Posterior cingulate gyrus (tissue), 11 donors: ENCODE measurements at regions of chr4 and their contacts with region 1.

Region 1: GRCh38 chr4:40897557-40898203 is 147.9 kb downstream of the NSUN7 start:
- DNase-seq: peak; percentile 46 to 96 (median 81)

Region 2: DNA sequence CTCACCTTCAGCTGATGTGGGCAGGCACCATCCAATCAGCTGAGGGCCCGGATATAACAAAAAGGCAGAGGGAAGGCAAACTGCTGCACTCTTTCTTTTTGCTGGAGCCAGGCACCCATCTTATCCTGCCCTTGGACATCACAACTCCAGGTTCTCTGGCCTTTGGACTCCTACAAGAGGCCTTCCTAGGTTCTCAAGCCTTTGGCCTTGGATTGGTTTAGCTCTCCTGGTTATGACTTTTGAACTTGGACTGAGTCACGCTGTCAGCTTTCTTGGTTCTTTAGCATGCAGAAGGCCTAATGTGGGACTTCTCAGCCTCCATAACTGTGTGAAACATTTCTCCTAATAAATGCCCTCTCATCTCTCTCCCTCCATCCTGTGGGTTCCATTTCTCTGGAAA is 864.1 kb before region 1 on chr4:
- intact Hi-C with region 1: no loop called
- DNase-seq: no peak

Region 3: GRCh38 chr4:40685300-40685699 is 212.4 kb before region 1 on chr4:
- intact Hi-C with region 1: no loop called
- DNase-seq: no peak

Region 4: DNA sequence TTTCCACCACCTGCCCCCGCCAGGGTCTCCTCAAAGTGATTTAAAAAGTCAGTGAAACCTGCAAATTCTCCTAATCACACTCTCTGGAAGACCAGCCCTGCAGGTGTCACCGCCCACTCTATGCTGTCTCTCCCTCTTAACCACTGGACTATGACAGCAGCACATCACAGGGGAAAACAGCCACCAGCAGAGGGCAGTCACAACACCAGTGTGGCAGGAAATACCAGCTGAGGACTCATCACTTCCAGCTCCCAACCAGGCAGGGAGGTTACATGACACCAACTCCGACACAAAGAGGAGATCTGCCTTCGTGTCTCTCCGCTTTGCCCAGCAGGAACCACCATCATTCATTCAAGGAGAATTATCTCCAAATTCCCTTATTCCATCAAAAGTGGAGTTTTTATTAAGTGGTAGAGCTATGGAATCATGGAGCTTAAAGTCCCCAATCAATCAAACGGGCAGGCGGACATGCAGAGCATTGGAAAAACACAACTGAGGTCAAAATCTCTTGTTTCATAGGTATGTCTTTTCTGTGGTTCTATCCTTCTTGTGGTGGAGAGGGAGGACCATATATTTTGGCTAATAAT is 56.6 kb before region 1 on chr4:
- intact Hi-C with region 1: loop called (anchors 5 kb)
- DNase-seq: peak in 9 of 10 donors; percentile 51 to 95 (median 75)